ENCODE measurements at regions of chr9 and their contacts with region 1.

Region 1: DNA sequence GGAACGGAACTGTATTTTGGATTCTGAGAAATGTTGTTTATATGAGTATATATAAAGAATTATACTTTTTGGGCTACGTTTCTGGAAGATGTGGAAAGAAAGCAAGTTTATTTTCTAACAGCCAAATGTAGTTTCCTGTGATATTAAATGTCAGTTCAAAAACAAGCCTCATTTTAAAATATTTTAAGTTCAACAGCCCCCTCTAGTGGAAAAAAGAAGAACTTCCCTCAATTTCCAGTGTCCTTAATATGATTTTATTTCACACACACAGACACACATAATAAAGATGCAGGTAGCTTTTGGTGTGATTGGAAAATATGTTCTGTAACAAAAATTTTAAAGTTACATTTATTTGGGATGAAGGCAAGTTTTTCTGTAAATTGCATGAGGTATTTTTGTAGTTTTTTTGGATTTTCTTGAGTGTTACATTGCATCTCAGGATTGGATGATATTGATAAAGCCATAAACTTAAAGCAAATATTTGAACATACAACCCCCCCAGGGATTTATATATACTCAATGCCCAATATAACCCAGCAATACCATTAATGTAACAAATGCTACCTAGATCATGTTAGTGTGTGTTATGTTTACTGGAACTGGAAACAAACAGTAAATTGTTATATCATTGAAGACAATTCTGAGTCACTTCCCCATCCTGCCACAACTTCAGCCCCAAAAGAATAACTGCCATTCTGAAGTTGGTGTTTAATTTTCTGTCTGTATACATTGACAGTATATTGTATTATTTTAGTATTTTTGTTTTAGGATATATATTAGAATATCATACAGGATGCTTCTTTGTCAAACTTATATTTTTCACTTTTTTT is 54.0 kb downstream of the CCDC171 start:
- DNase-seq: no peak
- H3K4me3 ChIP-seq: no peak overlapping the region
- H3K27ac ChIP-seq: no peak overlapping the region
- H3K4me1 ChIP-seq: no peaks in the 10 kb centered on the region
- H3K27me3 ChIP-seq: no peaks in the 10 kb centered on the region
- CTCF ChIP-seq: peak; percentile 30 to 73 (median 71)
- POLR2A ChIP-seq: no peak

Region 2: GRCh38 chr9:15104826-15105420 is 501.9 kb before region 1 on chr9:
- intact Hi-C with region 1: loop called (anchors 10 kb)
- DNase-seq: peak; percentile 17 to 43
- H3K4me3 ChIP-seq: no peak overlapping the region
- H3K27ac ChIP-seq: no peak overlapping the region
- H3K4me1 ChIP-seq: no peaks in the 10 kb centered on the region
- H3K27me3 ChIP-seq: no peaks in the 10 kb centered on the region
- CTCF ChIP-seq: peak; percentile 44 to 91 (median 84)
- POLR2A ChIP-seq: no peak

Region 3: DNA sequence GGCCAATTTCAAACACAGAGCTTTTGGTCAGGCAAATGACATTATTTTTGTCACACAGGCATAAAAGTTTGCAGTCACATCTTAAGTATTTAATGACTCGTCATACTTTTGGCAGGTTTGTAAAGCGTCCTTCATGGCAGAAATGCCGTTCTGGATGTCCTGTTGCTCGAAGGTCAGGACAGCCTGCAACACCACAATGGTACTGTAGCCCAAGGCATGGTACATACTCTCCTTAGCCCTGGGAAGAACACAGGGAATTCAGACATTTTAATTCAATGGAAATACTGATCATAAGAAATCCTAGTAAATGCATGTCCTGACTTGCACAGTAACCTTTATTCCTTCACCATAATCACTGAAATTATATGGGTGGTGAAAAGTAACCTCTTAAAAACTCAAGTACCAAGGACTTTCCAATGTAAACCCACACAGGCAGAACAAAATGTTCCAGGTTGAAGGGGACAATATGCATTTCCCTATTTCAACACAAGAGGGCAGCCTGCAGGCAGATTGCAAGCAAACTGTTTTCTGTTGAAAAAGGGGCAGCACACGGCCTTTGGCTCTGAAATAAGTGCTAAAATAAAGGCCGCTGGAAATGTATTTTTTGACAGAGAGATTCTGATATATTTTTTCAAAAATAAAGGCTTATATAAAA is 395.6 kb before region 1 on chr9:
- intact Hi-C with region 1: loop called (anchors 10 kb)
- DNase-seq: peak; percentile 69 to 71
- H3K4me3 ChIP-seq: no peak overlapping the region
- H3K27ac ChIP-seq: peak overlapping the region; percentile 60 to 78 (median 76)
- H3K4me1 ChIP-seq: peaks cover 23% of the 10 kb centered on the region in 2 donors
- H3K27me3 ChIP-seq: no peaks in the 10 kb centered on the region
- CTCF ChIP-seq: peak; percentile 66 to 96 (median 91)
- POLR2A ChIP-seq: no peak